MCF 10A (cell line): ENCODE measurements at regions of chr17 and their contacts with region 1.

Region 1: GRCh38 chr17:75046582-75047289 is at the starts of genes ATP5PD and KCTD2:
- DNase-seq: peak; percentile 96
- H3K4me3 Mint-ChIP-seq: peak within 1 kb of the TSS; percentile 98
- H3K27ac Mint-ChIP-seq: peak within 1 kb of the TSS; percentile 95
- H3K4me1 Mint-ChIP-seq: peaks cover 13% of the 10 kb centered on the region
- H3K27me3 Mint-ChIP-seq: no peaks in the 10 kb centered on the region
- CTCF ChIP-seq: no peak
- total RNA-seq, gene ATP5PD: 362 and 455 TPM in 2 replicates
- total RNA-seq, gene KCTD2: 11.9 and 12.8 TPM in 2 replicates

Region 2: DNA sequence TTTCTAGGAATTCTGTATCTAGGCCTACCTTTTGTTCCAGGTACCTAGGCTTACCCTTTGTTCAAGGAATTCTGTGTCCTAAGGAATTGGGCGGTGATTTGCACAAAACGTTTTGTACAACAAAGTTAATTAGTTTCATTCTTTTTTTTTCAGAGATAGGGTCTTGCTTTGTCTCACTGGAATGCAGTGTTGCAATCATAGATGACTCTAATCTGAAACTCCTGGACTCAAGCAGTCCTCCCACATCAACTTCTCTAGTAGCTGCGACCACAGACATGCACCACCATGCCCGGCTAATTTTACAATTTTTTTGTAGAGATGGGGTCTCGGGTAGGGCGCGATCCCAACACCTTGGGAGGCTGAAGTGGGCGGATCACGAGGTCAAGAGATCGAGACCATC is 52.3 kb before region 1 on chr17:
- CTCF ChIA-PET with region 1: interaction called, 3 read pairs
- POLR2A ChIA-PET with region 1: interaction called, 26 read pairs
- intact Hi-C with region 1: no loop called
- DNase-seq: peak; percentile 43
- H3K4me3 Mint-ChIP-seq: no peak overlapping the region
- H3K27ac Mint-ChIP-seq: no peak overlapping the region
- H3K4me1 Mint-ChIP-seq: peaks cover 25% of the 10 kb centered on the region
- H3K27me3 Mint-ChIP-seq: no peaks in the 10 kb centered on the region
- CTCF ChIP-seq: no peak

Region 3: DNA sequence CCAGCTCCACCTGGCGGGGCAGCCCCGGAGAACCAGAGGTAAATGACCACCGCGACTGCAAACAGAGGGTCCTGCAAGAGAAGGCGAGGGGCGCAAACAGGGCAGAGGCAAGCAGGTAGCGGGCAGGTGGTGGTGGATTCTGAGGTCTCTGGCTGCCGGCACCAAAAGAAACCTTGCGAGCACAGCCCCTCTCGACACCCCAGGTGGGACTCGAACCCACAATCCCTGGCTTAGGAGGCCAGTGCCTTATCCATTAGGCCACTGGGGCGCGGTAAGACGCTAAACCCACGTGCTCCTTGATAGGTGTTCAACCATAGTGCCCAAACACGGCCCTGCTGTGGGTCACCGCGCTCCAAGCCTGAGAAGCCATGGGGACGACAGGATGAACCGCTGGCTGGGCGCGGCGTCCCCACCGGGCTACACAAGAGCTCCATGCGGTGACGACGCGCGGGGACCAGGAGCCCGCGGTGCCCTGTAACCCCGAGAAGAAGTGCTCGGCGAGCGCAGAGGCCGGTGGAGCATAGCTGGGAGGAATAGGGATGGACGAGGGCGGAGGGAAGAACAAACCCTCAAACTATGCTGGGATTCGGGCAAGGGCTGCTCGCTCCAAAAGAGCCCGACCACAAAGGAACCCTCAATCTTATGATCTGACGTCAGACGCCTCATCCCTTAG is 12.4 kb before region 1 on chr17:
- CTCF ChIA-PET with region 1: interaction called, 3 read pairs
- POLR2A ChIA-PET with region 1: interaction called, 63 read pairs
- intact Hi-C with region 1: loop called (anchors 1 kb)
- DNase-seq: peak; percentile 96
- H3K4me3 Mint-ChIP-seq: peak overlapping the region; percentile 81
- H3K27ac Mint-ChIP-seq: peak overlapping the region; percentile 94
- H3K4me1 Mint-ChIP-seq: peaks cover 12% of the 10 kb centered on the region
- H3K27me3 Mint-ChIP-seq: no peaks in the 10 kb centered on the region
- CTCF ChIP-seq: no peak

Region 4: DNA sequence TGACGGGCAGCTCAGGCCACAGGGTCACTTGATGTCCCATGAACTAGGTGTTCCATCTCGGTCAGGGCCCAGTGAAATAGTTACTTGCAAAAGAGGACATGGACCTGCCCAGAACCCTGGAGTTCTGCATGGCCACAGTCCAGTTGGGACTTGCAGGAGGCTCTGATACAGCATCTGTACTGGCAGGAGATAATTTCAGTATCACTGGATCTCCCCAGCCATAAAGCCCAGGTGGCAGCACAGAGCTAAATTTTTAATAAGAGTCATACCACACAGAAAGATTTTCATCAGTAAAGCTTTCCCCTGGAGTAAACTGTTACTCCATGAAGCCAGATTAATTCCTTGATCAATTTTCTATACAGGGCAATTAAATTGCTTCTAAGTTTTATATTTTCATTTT is 23.0 kb after region 1 on chr17:
- CTCF ChIA-PET with region 1: interaction called, 7 read pairs
- POLR2A ChIA-PET with region 1: interaction called, 12 read pairs
- intact Hi-C with region 1: no loop called
- DNase-seq: peak; percentile 61
- H3K4me3 Mint-ChIP-seq: no peak overlapping the region
- H3K27ac Mint-ChIP-seq: no peak overlapping the region
- H3K4me1 Mint-ChIP-seq: peaks cover 5% of the 10 kb centered on the region
- H3K27me3 Mint-ChIP-seq: no peaks in the 10 kb centered on the region
- CTCF ChIP-seq: peak; percentile 47

Region 5: DNA sequence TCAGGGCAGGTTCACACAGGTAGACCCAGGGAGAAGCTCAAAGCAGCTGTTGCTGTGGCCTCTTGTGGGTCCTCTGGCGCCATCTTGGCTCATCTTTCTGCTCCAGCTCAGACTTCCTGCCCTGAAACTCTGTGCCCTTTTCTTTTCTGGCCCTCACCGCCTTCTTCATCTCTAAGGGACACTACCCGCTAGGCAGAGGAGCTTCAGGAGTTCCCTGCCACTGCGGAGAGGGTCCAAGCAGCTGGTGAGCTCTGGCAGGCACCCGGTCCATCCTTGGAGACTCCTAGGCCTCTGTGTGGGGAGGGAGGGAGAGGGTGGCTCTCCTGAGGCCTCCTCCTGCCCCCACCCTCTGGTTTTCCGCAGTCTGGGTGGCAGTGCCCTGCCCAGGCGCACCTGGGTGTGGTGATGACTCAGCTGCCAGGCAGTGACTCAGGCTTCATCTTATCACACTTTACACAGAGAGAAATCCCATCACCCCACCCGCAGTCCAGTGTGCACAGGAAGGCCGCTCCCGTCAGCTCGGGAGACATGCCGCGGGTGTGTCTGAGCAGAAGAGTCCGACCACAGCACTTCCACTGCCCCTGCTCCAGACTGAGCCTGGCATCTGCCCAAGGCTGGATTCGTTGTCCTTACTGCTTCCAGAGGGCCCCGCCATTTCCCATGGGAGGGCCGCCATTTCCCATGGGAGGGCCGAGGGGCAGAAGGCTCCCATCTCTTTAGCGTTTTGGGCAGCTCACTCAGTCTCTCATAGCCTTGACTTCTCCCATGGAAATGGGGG is 77.5 kb after region 1 on chr17:
- CTCF ChIA-PET with region 1: interaction called, 4 read pairs
- POLR2A ChIA-PET with region 1: interaction called, 12 read pairs
- intact Hi-C with region 1: no loop called
- DNase-seq: peak; percentile 98
- H3K4me3 Mint-ChIP-seq: peak overlapping the region; percentile 66
- H3K27ac Mint-ChIP-seq: peak overlapping the region; percentile 95
- H3K4me1 Mint-ChIP-seq: peaks cover 18% of the 10 kb centered on the region
- H3K27me3 Mint-ChIP-seq: no peaks in the 10 kb centered on the region
- CTCF ChIP-seq: no peak